ENCODE measurements at regions of chr16 and their contacts with region 1.

Region 1: DNA sequence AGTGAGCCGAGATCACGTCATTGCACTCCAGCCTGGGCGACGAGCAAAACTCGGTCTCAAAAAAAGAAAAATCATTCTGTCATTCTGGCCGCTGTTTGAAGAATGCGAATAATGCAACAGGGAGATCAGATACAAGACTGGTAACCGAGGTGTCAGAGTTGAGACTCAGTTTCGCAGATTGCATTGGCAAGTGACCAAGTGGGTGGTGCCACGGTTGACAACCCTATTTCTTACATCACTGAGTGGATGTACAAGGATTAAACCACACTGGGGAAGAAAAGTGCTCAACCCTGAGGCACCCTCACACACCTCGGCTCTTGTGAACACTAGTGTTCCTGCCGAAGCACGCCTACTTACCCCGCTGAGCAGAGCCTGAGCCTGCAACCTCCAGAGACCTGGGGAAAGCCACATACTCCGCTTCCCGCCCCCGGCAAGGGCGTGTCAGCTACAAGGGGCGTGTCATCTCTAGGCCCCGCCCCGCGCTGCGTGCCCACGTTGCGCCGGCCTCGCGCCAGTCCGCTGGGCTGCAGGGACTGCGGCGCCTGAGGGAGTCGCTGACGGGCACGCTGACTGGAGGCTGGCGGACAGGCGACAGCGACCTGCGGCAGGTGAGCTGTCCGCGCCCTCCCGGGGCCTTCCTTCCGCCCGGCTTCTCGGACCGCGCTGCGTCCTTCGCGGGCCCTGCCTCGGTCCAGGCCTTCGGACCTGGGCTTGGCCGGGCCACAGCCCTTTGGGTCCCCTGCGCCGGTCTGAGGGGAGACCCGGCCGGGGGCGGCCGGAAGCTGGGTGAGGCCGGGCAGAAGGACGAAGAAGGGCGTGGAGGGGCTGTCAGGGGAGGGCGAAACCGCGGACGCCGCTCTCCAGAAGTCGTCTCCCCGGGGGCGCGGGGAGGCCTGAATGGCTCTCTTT is at the start of gene HMOX2:
- DNase-seq: no peak
- H3K4me3 ChIP-seq: peak within 1 kb of the TSS; percentile 78
- H3K27me3 ChIP-seq: no peaks in the 10 kb centered on the region
- CTCF ChIP-seq: peak; percentile 44
- polyA plus RNA-seq, gene HMOX2: 43.5 and 59.5 TPM in 2 replicates

Region 2: DNA sequence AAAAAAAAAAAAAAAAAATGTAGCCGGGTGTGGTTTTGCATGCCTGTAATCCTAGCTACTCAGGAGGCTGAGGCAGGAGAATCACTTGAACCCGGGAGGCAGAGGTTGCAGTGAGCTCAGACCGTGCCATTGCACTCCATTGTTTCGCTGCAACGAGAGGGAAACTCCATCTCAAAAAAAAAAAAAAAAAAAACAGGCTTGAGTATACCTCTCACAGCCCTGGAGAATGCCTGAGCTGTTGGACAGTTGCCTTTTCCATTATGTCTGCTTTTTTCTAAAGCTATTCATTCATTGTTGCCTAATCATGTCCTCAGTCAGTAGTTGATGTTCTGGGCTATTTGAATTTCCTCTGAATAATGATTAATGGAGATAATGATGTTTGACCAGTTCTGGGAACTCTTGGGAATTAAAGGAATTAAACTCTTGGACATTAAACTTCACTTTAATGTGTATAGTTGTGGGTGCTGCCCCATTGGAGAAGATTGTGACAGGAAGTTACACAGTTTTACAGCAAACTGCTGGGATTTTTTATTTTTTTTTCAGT is 11.9 kb after region 1 on chr16:
- CTCF ChIA-PET with region 1: interaction called, 13 read pairs
- POLR2A ChIA-PET with region 1: no interaction called
- DNase-seq: no peak
- H3K4me3 ChIP-seq: no peak overlapping the region
- H3K27me3 ChIP-seq: no peaks in the 10 kb centered on the region
- CTCF ChIP-seq: no peak

Region 3: GRCh38 chr16:4624015-4624826 is 148.1 kb after region 1 on chr16 and contains the start of gene MGRN1:
- CTCF ChIA-PET with region 1: no interaction called
- POLR2A ChIA-PET with region 1: no interaction called
- DNase-seq: peak; percentile 91
- H3K4me3 ChIP-seq: peak within 1 kb of the TSS; percentile 98
- H3K27me3 ChIP-seq: no peaks in the 10 kb centered on the region
- CTCF ChIP-seq: peak; percentile 99
- polyA plus RNA-seq, gene MGRN1: 2.9 and 4.5 TPM in 2 replicates